ENCODE measurements at regions of chr4 and their contacts with region 1.

Region 1: DNA sequence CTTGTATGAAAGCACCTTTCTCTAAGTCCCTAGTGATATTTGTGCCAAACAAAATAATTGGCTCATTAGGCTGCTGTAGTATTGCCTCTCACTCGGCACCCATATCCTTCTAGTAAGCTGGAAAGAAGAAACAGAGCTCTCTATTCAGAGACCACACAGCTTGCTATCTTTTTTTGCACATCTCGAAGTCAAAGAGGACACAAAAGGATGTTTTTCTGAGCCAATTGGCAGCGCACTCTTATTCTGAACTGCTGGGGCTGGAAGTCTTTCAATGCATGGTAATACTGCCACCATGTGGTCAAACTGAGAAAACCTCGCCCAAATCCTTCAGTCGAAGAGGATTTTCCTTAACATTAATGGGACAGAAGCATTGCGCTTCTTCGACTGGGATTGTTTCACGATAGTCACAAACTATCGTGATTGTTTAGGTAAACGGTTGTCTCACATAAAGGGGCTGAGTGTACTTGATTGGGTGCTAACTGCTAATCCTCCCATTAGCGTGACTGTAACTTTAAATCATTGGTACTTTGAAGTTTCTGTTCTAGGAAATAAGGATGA is 572.0 kb upstream of the LCORL start:
- DNase-seq: peak; percentile 47
- H3K4me3 ChIP-seq: peak overlapping the region in 1 of 4 donors; percentile 5
- H3K27ac ChIP-seq: no peak overlapping the region
- H3K4me1 ChIP-seq: peaks cover 0 to 7% (median 2%) of the 10 kb centered on the region in 4 donors
- H3K27me3 ChIP-seq: no peaks in the 10 kb centered on the region
- CTCF ChIP-seq: peak; percentile 71 to 80 (median 74)
- EP300 ChIP-seq: no peak
- POLR2A ChIP-seq: no peak

Region 2: GRCh38 chr4:17544205-17544604 is 1049.3 kb before region 1 on chr4:
- in situ Hi-C with region 1: loop called in 3 of 4 experiments (anchors 10 to 25 kb)
- intact Hi-C with region 1: no loop called
- DNase-seq: peak; percentile 17
- H3K4me3 ChIP-seq: no peak overlapping the region
- H3K27ac ChIP-seq: no peak overlapping the region
- H3K4me1 ChIP-seq: peaks cover 0 to 4% (median 0%) of the 10 kb centered on the region in 4 donors
- H3K27me3 ChIP-seq: no peaks in the 10 kb centered on the region
- CTCF ChIP-seq: no peak
- EP300 ChIP-seq: no peak
- POLR2A ChIP-seq: no peak

Region 3: GRCh38 chr4:17846266-17846665 is 747.3 kb before region 1 on chr4:
- in situ Hi-C with region 1: loop called in 1 of 4 experiments (anchors 25 kb)
- intact Hi-C with region 1: no loop called
- DNase-seq: no peak
- H3K4me3 ChIP-seq: no peak overlapping the region
- H3K27ac ChIP-seq: no peak overlapping the region
- H3K4me1 ChIP-seq: no peaks in the 10 kb centered on the region
- H3K27me3 ChIP-seq: no peaks in the 10 kb centered on the region
- CTCF ChIP-seq: no peak
- EP300 ChIP-seq: no peak
- POLR2A ChIP-seq: no peak

Region 4: DNA sequence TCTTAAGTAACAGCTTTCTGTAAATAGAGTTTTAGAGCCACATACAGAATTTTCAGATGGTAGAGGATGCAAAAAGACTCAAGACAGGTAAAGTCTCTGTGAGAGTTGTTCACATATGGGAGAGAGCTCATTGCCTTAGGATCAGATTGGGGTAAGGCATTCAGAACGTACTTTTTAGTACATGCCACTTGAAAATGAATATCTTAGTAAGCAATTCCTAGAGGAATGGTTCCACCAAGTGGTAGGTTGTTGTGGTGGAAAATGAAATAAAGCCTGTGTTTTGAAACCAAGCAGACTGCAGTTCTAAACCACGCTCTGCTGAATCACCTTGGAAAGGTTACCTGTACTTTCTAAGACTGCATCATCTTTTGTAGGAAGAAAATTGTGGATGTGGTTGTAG is 24.9 kb before region 1 on chr4:
- in situ Hi-C with region 1: no loop called
- intact Hi-C with region 1: no loop called
- DNase-seq: no peak
- H3K4me3 ChIP-seq: no peak overlapping the region
- H3K27ac ChIP-seq: no peak overlapping the region
- H3K4me1 ChIP-seq: no peaks in the 10 kb centered on the region
- H3K27me3 ChIP-seq: no peaks in the 10 kb centered on the region
- CTCF ChIP-seq: no peak
- EP300 ChIP-seq: no peak
- POLR2A ChIP-seq: no peak

Region 5: GRCh38 chr4:18630218-18631110 is 36.9 kb after region 1 on chr4:
- in situ Hi-C with region 1: no loop called
- intact Hi-C with region 1: no loop called
- DNase-seq: no peak
- H3K4me3 ChIP-seq: no peak overlapping the region
- H3K27ac ChIP-seq: no peak overlapping the region
- H3K4me1 ChIP-seq: no peaks in the 10 kb centered on the region
- H3K27me3 ChIP-seq: no peaks in the 10 kb centered on the region
- CTCF ChIP-seq: no peak
- EP300 ChIP-seq: no peak
- POLR2A ChIP-seq: no peak